ENCODE measurements at regions of chr6 and their contacts with region 1.

Region 1: DNA sequence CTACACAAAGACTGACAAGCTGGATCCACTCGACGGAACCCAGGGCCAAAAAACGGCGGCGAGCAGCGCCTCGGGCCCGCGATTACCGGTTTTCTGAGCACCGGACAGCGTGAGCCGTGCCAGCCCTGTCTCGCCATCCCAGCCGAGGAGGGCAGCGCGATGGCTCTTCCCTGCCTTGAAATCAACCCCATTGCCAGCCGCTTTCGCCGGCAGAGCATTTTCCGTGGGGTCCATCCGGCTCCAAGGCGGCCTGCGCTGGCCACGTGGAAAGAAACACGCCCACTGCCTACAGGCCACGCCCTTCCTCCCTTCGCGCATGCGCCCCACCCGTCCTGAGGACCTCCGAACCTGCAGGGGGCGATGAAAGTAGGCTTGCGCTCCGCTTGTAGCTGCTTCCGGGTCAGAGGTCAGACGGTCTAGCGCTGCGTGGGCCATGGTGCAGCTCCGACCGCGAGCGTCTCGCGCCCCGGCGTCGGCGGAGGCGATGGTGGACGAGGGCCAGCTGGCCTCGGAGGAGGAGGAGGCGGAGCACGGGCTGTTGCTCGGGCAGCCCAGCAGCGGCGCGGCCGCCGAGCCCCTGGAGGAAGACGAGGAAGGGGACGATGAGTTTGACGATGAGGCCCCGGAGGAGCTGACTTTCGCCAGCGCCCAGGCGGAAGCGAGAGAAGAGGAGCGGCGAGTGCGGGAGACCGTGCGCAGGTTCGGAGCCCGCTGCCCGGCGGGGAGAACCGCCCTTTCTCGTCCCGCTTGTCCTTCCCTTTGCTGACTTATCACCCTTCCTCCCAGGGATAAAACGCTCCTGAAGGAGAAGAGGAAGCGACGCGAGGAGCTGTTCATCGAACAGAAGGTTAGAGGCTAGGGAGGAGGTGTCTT is at the start of gene NOL7:
- DNase-seq: peak; percentile 98
- H3K4me3 ChIP-seq: peak within 1 kb of the TSS; percentile 71 to 75
- H3K4me3 Mint-ChIP-seq: peak within 1 kb of the TSS; percentile 94 to 98 (median 97)
- H3K27ac ChIP-seq: peak within 1 kb of the TSS; percentile 82
- H3K27ac Mint-ChIP-seq: peak within 1 kb of the TSS; percentile 90 to 98 (median 97)
- H3K4me1 ChIP-seq: peaks cover 36% of the 10 kb centered on the region
- H3K4me1 Mint-ChIP-seq: peaks cover 25 to 54% (median 38%) of the 10 kb centered on the region in 4 donors
- H3K27me3 ChIP-seq: no peaks in the 10 kb centered on the region
- H3K27me3 Mint-ChIP-seq: no peaks in the 10 kb centered on the region
- total RNA-seq, gene NOL7: 62.1 to 69.1 TPM

Region 2: GRCh38 chr6:13454286-13455221 is 160.6 kb before region 1 on chr6:
- CTCF ChIA-PET with region 1: interaction called, 6 read pairs
- POLR2A ChIA-PET with region 1: no interaction called
- intact Hi-C with region 1: loop called (anchors 10 kb)
- DNase-seq: peak; percentile 52 to 89 (median 59)
- H3K4me3 ChIP-seq: peak overlapping the region; percentile 17 to 45
- H3K4me3 Mint-ChIP-seq: peak overlapping the region; percentile 61 to 81 (median 76)
- H3K27ac ChIP-seq: peak overlapping the region; percentile 8
- H3K27ac Mint-ChIP-seq: peak overlapping the region; percentile 81 to 94 (median 86)
- H3K4me1 ChIP-seq: peaks cover 22% of the 10 kb centered on the region
- H3K4me1 Mint-ChIP-seq: peaks cover 12 to 23% (median 22%) of the 10 kb centered on the region in 4 donors
- H3K27me3 ChIP-seq: no peaks in the 10 kb centered on the region
- H3K27me3 Mint-ChIP-seq: no peaks in the 10 kb centered on the region

Region 3: DNA sequence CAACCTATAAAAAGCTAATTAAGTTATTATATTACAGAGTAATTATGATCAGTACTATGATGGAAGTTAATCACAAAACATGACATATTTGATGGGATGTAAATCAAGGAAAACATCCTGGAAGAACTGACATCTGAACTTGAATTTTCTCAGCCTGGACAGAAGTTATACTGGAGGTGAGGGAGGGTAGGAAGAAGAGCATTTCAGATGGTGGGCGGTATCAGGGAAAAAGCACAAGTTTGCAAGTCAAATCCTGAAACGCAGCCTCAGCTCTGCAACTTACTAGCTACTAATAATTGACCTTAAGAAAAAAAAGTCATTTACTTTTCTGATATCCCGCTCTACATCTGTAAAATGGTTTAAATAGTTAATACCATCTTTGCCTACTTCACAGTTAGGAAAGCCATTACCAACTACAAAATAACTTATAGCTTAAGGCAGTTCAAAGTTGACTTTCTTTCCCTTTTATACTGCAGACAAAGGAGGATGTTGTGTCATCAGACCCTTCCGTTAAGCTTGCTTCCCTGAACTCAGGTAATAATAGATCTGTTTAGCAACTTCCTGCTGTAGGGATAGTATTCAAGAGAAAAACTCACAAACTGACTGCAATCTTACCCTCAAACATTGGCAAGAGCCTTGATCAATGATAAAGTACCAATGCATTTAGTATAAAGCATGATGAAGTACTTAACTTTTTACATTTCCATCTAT is 20.9 kb after region 1 on chr6:
- CTCF ChIA-PET with region 1: interaction called, 11 read pairs
- POLR2A ChIA-PET with region 1: interaction called, 23 read pairs
- intact Hi-C with region 1: no loop called
- DNase-seq: peak in 1 of 5 donors; percentile 5
- H3K4me3 ChIP-seq: no peak overlapping the region
- H3K4me3 Mint-ChIP-seq: no peak overlapping the region
- H3K27ac ChIP-seq: no peak overlapping the region
- H3K27ac Mint-ChIP-seq: peak overlapping the region in 6 of 7 donors; percentile 13 to 77 (median 46)
- H3K4me1 ChIP-seq: peaks cover 18% of the 10 kb centered on the region
- H3K4me1 Mint-ChIP-seq: peaks cover 14 to 38% (median 22%) of the 10 kb centered on the region in 4 donors
- H3K27me3 ChIP-seq: no peaks in the 10 kb centered on the region
- H3K27me3 Mint-ChIP-seq: no peaks in the 10 kb centered on the region

Region 4: GRCh38 chr6:13696226-13696625 is 81.1 kb after region 1 on chr6:
- CTCF ChIA-PET with region 1: interaction called, 18 read pairs
- POLR2A ChIA-PET with region 1: interaction called, 11 read pairs
- intact Hi-C with region 1: no loop called
- DNase-seq: no peak
- H3K4me3 ChIP-seq: no peak overlapping the region
- H3K4me3 Mint-ChIP-seq: peak overlapping the region in 4 of 8 donors; percentile 15 to 67 (median 38)
- H3K27ac ChIP-seq: peak overlapping the region; percentile 42
- H3K27ac Mint-ChIP-seq: peak overlapping the region; percentile 39 to 94 (median 86)
- H3K4me1 ChIP-seq: peaks cover 86% of the 10 kb centered on the region
- H3K4me1 Mint-ChIP-seq: peaks cover 53 to 78% (median 64%) of the 10 kb centered on the region in 4 donors
- H3K27me3 ChIP-seq: no peaks in the 10 kb centered on the region
- H3K27me3 Mint-ChIP-seq: no peaks in the 10 kb centered on the region

Region 5: DNA sequence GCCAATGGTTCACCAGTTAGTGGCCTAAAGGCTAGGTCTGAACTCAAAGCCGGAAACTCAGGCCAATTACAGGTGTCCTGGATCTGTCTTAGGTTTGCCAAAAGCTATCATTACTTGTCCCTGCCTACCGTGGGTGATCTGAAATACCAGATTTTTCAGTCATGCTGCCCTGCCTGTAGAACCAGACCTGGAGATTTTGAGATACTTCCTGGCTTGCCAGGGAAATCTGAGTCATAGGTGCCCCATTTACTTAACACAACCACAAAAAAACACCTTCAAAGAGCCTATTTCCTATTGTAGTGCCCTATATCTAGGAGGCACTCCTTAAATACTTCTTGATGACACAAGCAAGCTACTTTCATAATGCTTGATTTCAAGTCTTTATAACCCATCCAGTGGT is 110.4 kb after region 1 on chr6:
- CTCF ChIA-PET with region 1: interaction called, 4 read pairs
- POLR2A ChIA-PET with region 1: interaction called, 24 read pairs
- intact Hi-C with region 1: no loop called
- DNase-seq: peak; percentile 54 to 79 (median 75)
- H3K4me3 ChIP-seq: peak overlapping the region in 1 of 2 donors; percentile 0
- H3K4me3 Mint-ChIP-seq: peak overlapping the region; percentile 68 to 89 (median 82)
- H3K27ac ChIP-seq: peak overlapping the region; percentile 46
- H3K27ac Mint-ChIP-seq: peak overlapping the region; percentile 86 to 99 (median 96)
- H3K4me1 ChIP-seq: peaks cover 42% of the 10 kb centered on the region
- H3K4me1 Mint-ChIP-seq: peaks cover 25 to 41% (median 30%) of the 10 kb centered on the region in 4 donors
- H3K27me3 ChIP-seq: no peaks in the 10 kb centered on the region
- H3K27me3 Mint-ChIP-seq: no peaks in the 10 kb centered on the region

Region 6: DNA sequence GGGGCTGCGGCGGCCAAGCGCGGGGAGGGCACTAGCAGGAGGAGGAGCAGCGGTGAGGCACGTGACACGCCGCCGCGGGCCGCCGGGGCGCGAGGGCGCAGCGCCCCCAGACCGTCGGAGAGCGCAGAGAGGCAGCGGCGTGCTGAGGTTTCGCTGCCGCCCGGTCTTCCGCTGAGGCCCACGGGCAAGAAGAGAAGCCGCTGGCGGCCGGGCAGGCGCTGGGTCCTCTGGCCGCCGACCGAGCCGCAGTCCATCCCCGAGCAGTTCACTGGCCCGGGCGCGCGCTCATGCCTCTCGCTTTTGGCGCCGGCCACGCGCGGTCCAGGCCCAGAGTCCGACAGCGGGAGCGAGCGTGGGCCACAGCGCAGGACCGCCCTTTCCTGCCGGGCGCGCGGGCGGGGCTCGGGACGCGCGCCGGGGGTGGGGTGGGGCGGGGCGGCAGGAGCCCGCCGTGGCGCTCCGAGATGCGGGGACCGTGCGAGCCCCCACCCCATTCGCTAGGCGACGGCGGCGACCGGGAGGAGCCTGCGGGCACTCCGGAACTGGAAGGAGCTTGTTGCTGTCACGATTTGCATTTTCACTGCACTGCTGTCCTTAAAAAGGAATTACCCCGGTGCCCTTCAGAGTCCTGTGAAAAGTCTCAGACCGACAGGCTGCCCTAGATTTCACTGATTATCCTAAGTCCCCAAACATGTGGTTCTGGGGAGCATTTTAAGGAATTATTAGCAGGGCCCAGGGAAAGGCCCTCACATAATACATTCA is 199.2 kb after region 1 on chr6 and contains the start of gene MCUR1:
- CTCF ChIA-PET with region 1: interaction called, 7 read pairs
- POLR2A ChIA-PET with region 1: interaction called, 18 read pairs
- intact Hi-C with region 1: loop called (anchors 2 kb)
- DNase-seq: peak; percentile 77 to 83 (median 81)
- H3K4me3 ChIP-seq: peak within 1 kb of the TSS; percentile 34 to 78
- H3K4me3 Mint-ChIP-seq: peak within 1 kb of the TSS; percentile 88 to 93 (median 90)
- H3K27ac ChIP-seq: peak within 1 kb of the TSS; percentile 62
- H3K27ac Mint-ChIP-seq: peak within 1 kb of the TSS; percentile 82 to 92 (median 89)
- H3K4me1 ChIP-seq: peaks cover 28% of the 10 kb centered on the region
- H3K4me1 Mint-ChIP-seq: peaks cover 24 to 33% (median 31%) of the 10 kb centered on the region in 4 donors
- H3K27me3 ChIP-seq: no peaks in the 10 kb centered on the region
- H3K27me3 Mint-ChIP-seq: no peaks in the 10 kb centered on the region
- total RNA-seq, gene MCUR1: 11.3 to 11.5 TPM

Measured in CD4-positive, alpha-beta memory T cell (primary cell).